ENCODE measurements at regions of chr12 and their contacts with region 1.

Region 1: GRCh38 chr12:11684393-11684792 is 34.9 kb downstream of the ETV6 start:
- DNase-seq: no peak
- H3K4me3 ChIP-seq: no peak overlapping the region
- H3K27ac ChIP-seq: no peak overlapping the region
- H3K4me1 ChIP-seq: no peaks in the 10 kb centered on the region
- H3K27me3 ChIP-seq: no peaks in the 10 kb centered on the region
- CTCF ChIP-seq: no peak

Region 2: GRCh38 chr12:11615481-11615880 is 68.9 kb before region 1 on chr12:
- CTCF ChIA-PET with region 1: no interaction called
- POLR2A ChIA-PET with region 1: no interaction called
- intact Hi-C with region 1: no loop called
- DNase-seq: no peak
- H3K4me3 ChIP-seq: no peak overlapping the region
- H3K27ac ChIP-seq: no peak overlapping the region
- H3K4me1 ChIP-seq: no peaks in the 10 kb centered on the region
- H3K27me3 ChIP-seq: no peaks in the 10 kb centered on the region
- CTCF ChIP-seq: no peak

Region 3: DNA sequence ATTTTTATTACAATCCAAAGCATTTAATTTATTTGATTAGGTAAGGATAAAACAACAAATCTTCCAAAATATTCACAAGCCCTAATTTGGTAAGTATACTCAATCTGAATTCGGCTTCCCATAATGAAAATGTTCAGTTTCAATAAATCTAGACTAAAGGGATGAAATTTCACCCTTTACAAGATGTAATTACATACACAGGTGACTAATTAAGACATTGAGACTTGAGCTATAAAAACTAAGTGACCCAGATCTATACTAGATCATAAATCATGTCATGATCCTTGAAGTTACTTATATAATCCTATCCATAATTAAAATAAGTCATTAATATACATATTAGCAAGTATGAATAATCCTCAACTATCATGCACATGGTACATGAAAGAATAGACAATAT is 545.9 kb after region 1 on chr12:
- CTCF ChIA-PET with region 1: no interaction called
- POLR2A ChIA-PET with region 1: interaction called, 10 read pairs
- intact Hi-C with region 1: no loop called
- DNase-seq: no peak
- H3K4me3 ChIP-seq: no peak overlapping the region
- H3K27ac ChIP-seq: no peak overlapping the region
- H3K4me1 ChIP-seq: no peaks in the 10 kb centered on the region; the same call in 1 of the 2 replicates
- H3K27me3 ChIP-seq: no peaks in the 10 kb centered on the region
- CTCF ChIP-seq: no peak

Measured in PC-9 (cell line).